AG04449 (cell line): ENCODE measurements at regions of chr2 and their contacts with region 1.

Region 1: DNA sequence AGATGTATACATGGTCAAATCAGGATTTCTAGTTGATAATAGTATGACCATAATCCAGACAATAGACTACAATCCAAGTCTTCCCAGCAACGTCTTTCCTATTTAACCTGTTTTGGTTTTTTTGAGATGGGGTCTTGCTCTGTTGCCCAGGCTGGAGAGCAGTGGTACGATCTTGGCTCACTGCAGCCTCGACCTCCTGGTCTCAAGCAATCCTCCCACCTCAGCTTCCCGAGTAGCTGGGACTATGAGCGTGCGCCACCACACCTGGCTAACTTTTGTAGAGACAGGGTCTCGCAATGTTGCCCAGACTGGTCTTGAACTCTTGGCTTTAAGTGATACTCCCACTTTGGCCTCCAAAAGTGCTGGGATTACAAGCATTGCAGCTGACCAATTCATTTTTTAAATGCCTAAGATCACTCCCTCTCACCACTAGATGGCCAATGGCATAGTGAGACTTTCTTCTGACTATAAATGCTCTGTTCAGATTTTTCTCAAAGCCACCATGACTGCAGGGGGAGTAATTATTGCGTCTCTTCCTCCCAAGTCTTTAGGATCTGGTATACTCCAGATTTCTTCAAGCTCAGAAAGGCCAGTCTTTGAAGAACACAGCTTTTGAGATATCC is 47.6 kb downstream of the HNRNPLL start:
- DNase-seq: no peak
- H3K4me3 ChIP-seq: no peak overlapping the region
- CTCF ChIP-seq: peak; percentile 30

Region 2: DNA sequence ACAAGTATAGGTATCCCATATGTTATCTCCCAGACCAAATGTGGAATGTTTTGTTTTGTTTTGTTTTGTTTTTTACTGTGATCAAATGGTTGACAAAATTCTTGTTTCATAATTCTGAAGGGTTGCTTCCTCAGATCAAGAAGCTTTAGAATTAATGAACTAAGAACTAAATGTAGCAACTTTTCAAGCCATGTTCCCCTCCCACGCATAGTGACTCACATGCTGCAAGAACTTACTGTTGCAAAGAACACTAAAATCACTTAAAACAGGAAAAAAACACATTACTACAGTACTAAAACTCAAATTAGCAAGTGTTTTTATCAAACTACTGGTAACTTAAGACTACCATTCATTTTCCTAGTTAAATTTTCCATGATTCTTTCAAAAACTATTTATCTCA is 17.1 kb after region 1 on chr2:
- CTCF ChIA-PET with region 1: interaction called, 25 read pairs
- POLR2A ChIA-PET with region 1: no interaction called
- DNase-seq: peak; percentile 23
- H3K4me3 ChIP-seq: no peak overlapping the region
- CTCF ChIP-seq: no peak

Region 3: GRCh38 chr2:38590053-38590452 is 35.0 kb after region 1 on chr2:
- CTCF ChIA-PET with region 1: no interaction called
- POLR2A ChIA-PET with region 1: no interaction called
- DNase-seq: no peak
- H3K4me3 ChIP-seq: no peak overlapping the region
- CTCF ChIP-seq: no peak

Region 4: GRCh38 chr2:38728694-38729093 is 173.6 kb after region 1 on chr2:
- CTCF ChIA-PET with region 1: interaction called, 23 read pairs
- POLR2A ChIA-PET with region 1: no interaction called
- DNase-seq: no peak
- H3K4me3 ChIP-seq: no peak overlapping the region
- CTCF ChIP-seq: no peak

Region 5: DNA sequence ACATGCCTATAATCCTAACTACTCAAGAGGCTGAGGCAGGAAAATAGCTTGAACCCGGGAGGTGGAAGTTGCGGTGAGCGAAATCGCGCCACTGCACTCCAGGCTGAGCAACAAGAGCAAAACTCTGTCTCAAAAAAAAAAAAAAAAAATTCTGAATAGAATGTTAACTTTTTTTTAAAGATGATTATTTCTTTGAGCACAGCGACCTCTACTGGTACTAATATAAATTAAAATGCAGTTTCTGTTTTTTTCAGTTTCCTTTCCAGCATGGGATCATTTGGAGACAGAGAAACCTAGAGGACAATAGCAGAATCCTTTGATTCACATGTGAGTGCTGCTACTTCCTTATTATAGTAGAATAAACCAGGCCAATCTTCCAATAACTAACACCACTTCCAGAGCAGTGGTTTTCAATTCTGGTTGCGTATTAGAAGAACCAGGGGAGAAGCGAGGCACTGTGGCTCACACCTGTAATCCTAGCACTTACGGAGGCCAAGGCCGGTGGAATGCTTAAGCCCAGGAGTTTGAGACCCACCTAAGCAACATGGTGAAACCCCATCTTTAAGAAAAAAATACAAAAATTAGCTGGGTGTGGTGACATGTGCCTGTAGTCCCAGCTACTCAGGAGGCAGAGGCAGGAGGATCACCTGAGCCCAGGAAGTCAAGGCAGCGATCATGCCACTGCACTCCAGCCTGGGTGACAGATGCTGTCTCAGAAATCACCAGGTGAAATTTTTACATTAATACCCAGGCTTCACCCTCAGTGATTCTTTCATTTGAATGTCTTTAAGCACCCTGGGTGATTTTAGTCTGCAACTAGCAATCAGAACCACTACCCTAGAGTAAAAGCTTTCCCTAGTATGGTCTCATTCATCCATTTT is 186.0 kb after region 1 on chr2:
- CTCF ChIA-PET with region 1: interaction called, 14 read pairs
- POLR2A ChIA-PET with region 1: no interaction called
- DNase-seq: no peak
- H3K4me3 ChIP-seq: no peak overlapping the region
- CTCF ChIP-seq: no peak